Breast epithelium (tissue), 4 donors: ENCODE measurements at regions of chr3 and their contacts with region 1.

Region 1: GRCh38 chr3:132343018-132343612 is 25.9 kb downstream of the ACP3 start:
- DNase-seq: no peak
- H3K4me3 ChIP-seq: no peak overlapping the region
- H3K27ac ChIP-seq: no peak overlapping the region
- H3K4me1 ChIP-seq: no peaks in the 10 kb centered on the region
- H3K27me3 ChIP-seq: no peaks in the 10 kb centered on the region
- CTCF ChIP-seq: peak; percentile 79 to 91 (median 88)
- POLR2A ChIP-seq: no peak

Region 2: GRCh38 chr3:132253262-132253878 is 89.7 kb before region 1 on chr3:
- intact Hi-C with region 1: loop called (anchors 10 kb)
- DNase-seq: no peak
- H3K4me3 ChIP-seq: no peak overlapping the region
- H3K27ac ChIP-seq: no peak overlapping the region
- H3K4me1 ChIP-seq: no peaks in the 10 kb centered on the region
- H3K27me3 ChIP-seq: no peaks in the 10 kb centered on the region
- CTCF ChIP-seq: peak in 2 of 3 donors; percentile 64 to 69
- POLR2A ChIP-seq: no peak

Region 3: GRCh38 chr3:132315851-132316250 is 27.3 kb before region 1 on chr3:
- intact Hi-C with region 1: loop called (anchors 1 kb)
- DNase-seq: no peak
- H3K4me3 ChIP-seq: no peak overlapping the region
- H3K27ac ChIP-seq: no peak overlapping the region
- H3K4me1 ChIP-seq: no peaks in the 10 kb centered on the region
- H3K27me3 ChIP-seq: no peaks in the 10 kb centered on the region
- CTCF ChIP-seq: no peak
- POLR2A ChIP-seq: no peak